Activated naive CD4-positive, alpha-beta T cell treated with anti-CD3 and anti-CD28 coated beads for 36 hours (primary cell): ENCODE measurements at regions of chr13 and their contacts with region 1.

Region 1: DNA sequence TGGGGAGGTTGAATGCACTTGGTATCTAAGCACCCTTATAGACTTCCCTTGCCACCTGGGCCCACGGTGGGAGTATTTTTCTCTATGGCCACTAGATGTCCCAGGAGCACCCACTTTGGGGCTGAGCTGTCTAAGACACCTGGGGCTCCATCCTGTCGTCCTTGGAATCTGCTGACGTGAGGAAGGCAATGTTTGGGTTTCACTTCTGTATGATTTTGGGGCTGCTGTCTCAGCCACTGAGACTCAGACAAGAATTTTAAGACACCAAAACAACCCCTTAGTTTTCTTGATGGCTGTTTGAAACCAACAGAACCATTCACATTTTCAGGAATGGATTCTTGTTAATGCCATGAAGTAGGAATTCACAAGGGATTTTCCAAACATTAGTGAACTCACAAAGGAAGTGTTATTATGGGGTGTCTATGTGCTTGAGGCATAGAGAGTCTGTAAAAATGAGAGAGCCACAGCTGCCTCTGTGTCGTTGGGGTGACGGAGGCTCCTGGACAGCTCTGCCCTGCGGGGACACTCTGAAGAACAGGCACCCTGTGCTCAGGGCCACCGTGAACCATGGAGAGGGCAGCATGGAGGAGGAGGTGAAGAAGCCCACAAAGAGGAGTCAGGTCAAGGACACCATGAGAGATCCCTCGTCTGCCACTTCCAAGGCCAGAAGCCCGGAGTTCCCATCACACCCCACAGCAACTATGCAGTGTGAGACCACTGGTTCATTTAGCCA is 106.8 kb upstream of the SPATA13 start:
- DNase-seq: peak; percentile 80
- H3K4me3 Mint-ChIP-seq: no peak overlapping the region
- H3K27ac Mint-ChIP-seq: no peak overlapping the region
- H3K4me1 Mint-ChIP-seq: peaks cover 10% of the 10 kb centered on the region
- H3K27me3 Mint-ChIP-seq: peaks cover 2% of the 10 kb centered on the region

Region 2: DNA sequence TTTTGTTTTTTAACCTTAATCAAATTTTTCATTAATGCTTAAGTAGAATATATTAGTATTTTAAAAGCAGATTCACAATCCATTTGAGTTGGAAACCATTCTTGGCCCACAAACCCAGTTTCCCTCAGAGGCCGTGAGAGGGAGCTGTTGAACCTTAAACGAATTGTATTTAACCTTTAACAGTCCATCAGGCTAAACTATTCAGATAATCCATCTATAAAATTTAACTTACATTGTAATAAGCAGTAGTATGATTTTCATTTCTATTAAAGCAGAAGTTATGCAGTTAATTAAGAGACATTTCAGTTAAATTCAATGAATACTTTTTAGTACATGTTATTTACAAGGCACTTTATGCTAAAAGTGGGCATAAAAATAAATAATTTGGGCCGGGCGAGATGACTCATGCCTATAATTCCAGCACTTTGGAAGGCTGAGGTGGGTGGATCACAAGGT is 33.3 kb before region 1 on chr13:
- CTCF ChIA-PET with region 1: interaction called, 4 read pairs
- intact Hi-C with region 1: loop called (anchors 2 kb)
- DNase-seq: peak; percentile 67
- H3K4me3 Mint-ChIP-seq: no peak overlapping the region
- H3K27ac Mint-ChIP-seq: no peak overlapping the region
- H3K4me1 Mint-ChIP-seq: no peaks in the 10 kb centered on the region
- H3K27me3 Mint-ChIP-seq: no peaks in the 10 kb centered on the region

Region 3: DNA sequence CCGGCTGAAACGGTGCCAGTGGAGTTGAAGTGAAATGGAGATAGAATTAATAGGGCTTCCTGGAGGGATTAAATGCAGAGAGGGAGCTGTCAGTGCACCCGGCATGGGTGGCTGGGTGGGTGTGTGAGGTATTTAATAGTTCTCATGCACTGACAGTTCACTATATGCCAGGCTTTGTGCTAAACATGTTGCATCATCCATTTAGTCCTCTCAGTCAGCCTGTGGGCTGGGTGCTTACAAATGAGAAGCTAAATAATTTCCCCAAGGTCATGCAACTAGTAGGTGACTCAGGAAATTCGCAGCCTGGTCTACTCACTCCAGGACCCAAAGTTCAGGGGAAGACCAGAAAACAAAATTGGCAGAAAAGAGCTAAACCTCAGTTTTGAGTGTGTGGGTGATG is 43.4 kb after region 1 on chr13:
- CTCF ChIA-PET with region 1: interaction called, 9 read pairs
- intact Hi-C with region 1: loop called (anchors 2 kb)
- DNase-seq: peak; percentile 69
- H3K4me3 Mint-ChIP-seq: no peak overlapping the region
- H3K27ac Mint-ChIP-seq: peak overlapping the region; percentile 65
- H3K4me1 Mint-ChIP-seq: peaks cover 17% of the 10 kb centered on the region
- H3K27me3 Mint-ChIP-seq: peaks cover 6% of the 10 kb centered on the region

Region 4: DNA sequence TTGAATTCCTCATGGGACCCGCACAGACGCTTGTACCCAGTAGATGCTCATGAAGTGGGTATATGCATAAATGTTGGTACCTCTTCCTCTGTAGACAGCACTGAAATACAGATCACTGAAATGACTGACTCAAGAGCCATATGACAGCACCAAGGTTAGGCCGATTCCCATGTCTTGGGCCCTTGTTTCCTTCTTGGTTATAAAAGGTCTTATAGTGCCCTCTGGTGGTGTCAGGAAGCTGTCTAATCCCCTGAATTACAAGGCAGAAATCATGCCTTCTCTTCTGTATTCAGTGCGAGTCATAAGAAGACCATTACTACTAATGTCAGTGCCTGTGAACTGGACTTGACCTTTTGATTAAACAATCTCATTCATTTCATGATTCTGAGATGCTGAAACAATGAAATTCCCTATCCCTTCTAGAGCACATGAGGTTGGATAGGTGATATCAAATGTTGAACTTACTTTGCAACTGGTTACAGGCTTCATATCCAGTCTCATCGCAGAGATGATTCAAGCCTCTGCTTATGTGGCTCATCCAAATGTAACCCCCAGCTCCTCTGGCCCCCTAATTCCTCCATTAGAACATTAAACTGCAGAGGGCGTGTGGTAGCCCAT is 166.5 kb after region 1 on chr13:
- CTCF ChIA-PET with region 1: interaction called, 45 read pairs
- intact Hi-C with region 1: loop called (anchors 1 kb)
- DNase-seq: peak; percentile 72
- H3K4me3 Mint-ChIP-seq: no peak overlapping the region
- H3K27ac Mint-ChIP-seq: no peak overlapping the region
- H3K4me1 Mint-ChIP-seq: peaks cover 22% of the 10 kb centered on the region
- H3K27me3 Mint-ChIP-seq: no peaks in the 10 kb centered on the region

Region 5: DNA sequence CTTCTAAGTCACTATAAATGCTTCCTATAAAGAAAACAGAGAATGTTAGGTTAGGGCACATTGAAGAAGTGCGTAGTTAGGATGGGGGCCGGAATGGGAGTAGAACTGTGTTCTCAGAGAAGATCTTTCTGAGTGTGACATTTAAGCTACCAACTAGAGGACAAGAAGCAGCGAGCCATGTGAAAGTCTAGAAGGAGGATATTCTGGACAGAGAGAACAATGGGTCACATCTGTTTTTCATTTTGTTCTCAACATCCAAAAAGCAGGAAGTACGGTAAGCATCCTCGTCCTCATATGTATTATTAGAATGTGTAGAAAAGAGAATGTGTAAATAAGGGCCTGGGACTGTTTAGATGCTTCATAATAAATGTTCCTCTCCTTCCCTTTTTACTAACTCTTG is 503.4 kb after region 1 on chr13:
- CTCF ChIA-PET with region 1: no interaction called
- intact Hi-C with region 1: loop called (anchors 10 kb)
- DNase-seq: no peak
- H3K4me3 Mint-ChIP-seq: no peak overlapping the region
- H3K27ac Mint-ChIP-seq: no peak overlapping the region
- H3K4me1 Mint-ChIP-seq: peaks cover 8% of the 10 kb centered on the region
- H3K27me3 Mint-ChIP-seq: peaks cover 43% of the 10 kb centered on the region